B cell (primary cell): ENCODE measurements at regions of chr12 and their contacts with region 1.

Region 1: DNA sequence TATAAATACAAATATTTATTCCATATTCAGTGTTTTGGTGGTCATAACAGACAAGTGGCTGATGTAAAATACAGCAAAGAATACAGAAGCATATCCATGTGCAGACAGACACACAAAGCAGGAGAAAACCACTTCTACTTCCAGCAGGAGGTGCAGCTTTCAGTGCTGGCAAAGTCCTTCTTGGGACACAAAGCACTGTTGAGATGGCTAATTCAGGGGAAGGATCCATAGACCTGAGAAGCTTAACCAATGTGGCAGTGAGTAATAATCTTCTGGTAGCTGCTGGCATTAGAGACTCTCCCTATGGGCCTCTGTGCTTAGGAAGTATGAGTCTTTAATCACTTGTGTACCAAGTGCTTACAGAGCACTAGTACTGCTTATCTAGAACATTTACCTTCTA is 26.8 kb downstream of the AMN1 start:
- DNase-seq: no peak
- ATAC-seq: no peak
- H3K4me3 ChIP-seq: no peak overlapping the region
- H3K4me3 Mint-ChIP-seq: no peak overlapping the region
- H3K27ac ChIP-seq: no peak overlapping the region
- H3K27ac Mint-ChIP-seq: no peak overlapping the region
- H3K4me1 ChIP-seq: peaks cover 0 to 3% of the 10 kb centered on the region in 2 donors
- H3K4me1 Mint-ChIP-seq: peaks cover 13% of the 10 kb centered on the region
- H3K27me3 ChIP-seq: no peaks in the 10 kb centered on the region
- H3K27me3 Mint-ChIP-seq: no peaks in the 10 kb centered on the region
- CTCF ChIP-seq: no peak

Region 2: DNA sequence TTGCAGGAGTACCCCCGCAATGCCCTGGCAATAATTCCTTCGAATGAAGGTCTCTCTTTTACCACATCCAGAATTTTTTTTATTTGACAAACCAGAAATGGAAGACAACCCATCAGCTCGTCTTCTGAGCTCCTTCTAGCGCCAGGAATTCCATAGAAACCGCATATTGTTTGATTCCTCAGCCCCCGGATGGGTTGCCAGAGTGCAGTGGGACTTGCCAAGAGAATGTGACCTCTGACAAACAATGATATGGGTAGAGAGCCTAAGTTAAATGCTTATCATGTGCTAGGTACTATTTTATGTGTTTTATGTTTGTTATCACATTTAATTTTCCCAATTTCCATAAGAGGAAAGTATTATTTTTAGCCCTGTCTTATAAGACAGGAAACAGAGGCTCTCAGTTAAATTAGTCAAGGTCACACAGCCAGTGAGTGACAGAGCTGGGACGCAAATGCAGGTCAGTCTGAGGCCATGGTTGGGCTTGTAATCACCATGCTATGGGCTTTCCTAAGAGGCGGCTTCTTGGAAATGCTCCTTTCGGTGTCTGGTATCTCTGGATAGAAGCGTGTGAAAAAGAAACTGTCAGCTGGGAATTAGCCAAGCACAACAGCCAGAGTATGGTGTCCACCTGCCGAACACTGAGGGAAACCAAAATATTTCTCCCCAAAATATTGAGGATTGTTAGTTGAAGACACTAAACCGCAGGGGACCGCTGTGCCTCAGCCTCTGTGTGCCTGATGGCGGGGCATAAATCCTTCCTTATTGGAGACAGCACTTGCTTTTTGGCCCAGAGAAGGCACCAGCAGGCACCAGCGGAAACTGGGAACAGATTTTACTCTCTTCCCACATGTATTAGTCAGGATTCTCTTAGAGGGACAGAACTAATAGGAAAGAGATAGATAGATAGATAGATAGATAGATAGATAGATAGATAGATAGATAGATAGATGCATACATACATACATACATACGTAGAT is 72.0 kb before region 1 on chr12:
- CTCF ChIA-PET with region 1: no interaction called
- POLR2A ChIA-PET with region 1: no interaction called
- intact Hi-C with region 1: no loop called
- DNase-seq: no peak
- ATAC-seq: no peak
- H3K4me3 ChIP-seq: no peak overlapping the region
- H3K4me3 Mint-ChIP-seq: no peak overlapping the region
- H3K27ac ChIP-seq: no peak overlapping the region
- H3K27ac Mint-ChIP-seq: no peak overlapping the region
- H3K4me1 ChIP-seq: peaks cover 13% of the 10 kb centered on the region in 2 donors
- H3K4me1 Mint-ChIP-seq: peaks cover 29% of the 10 kb centered on the region
- H3K27me3 ChIP-seq: no peaks in the 10 kb centered on the region
- H3K27me3 Mint-ChIP-seq: no peaks in the 10 kb centered on the region
- CTCF ChIP-seq: no peak

Region 3: DNA sequence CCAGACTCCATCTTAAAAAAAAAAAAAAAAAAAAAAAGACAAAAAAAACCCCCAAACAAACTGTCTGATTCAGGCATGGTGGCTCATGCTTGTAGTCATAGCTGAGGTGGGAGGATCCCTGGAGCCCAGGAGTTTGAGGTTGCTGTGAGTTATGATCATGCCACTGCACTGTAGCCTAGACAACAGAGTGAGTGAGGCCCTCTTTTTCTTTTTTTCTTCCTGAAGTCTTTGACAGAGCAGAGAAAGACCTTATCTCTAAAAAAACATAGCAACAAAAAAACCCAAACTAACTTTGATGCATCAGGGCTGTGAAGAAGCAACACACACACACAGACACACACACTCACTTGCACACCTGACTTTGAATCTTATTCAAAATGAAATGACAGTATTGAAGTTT is 34.4 kb after region 1 on chr12:
- CTCF ChIA-PET with region 1: no interaction called
- POLR2A ChIA-PET with region 1: no interaction called
- intact Hi-C with region 1: no loop called
- DNase-seq: peak; percentile 14
- ATAC-seq: peak; percentile 31
- H3K4me3 ChIP-seq: no peak overlapping the region
- H3K4me3 Mint-ChIP-seq: no peak overlapping the region
- H3K27ac ChIP-seq: no peak overlapping the region
- H3K27ac Mint-ChIP-seq: peak overlapping the region; percentile 70
- H3K4me1 ChIP-seq: peaks cover 19 to 33% of the 10 kb centered on the region in 2 donors
- H3K4me1 Mint-ChIP-seq: peaks cover 52% of the 10 kb centered on the region
- H3K27me3 ChIP-seq: no peaks in the 10 kb centered on the region
- H3K27me3 Mint-ChIP-seq: no peaks in the 10 kb centered on the region
- CTCF ChIP-seq: no peak

Region 4: GRCh38 chr12:32005496-32006125 is 303.6 kb after region 1 on chr12:
- CTCF ChIA-PET with region 1: no interaction called
- POLR2A ChIA-PET with region 1: interaction called, 10 read pairs
- intact Hi-C with region 1: no loop called
- DNase-seq: no peak
- ATAC-seq: no peak
- H3K4me3 ChIP-seq: no peak overlapping the region
- H3K4me3 Mint-ChIP-seq: no peak overlapping the region
- H3K27ac ChIP-seq: no peak overlapping the region
- H3K27ac Mint-ChIP-seq: peak overlapping the region; percentile 5
- H3K4me1 ChIP-seq: no peaks in the 10 kb centered on the region
- H3K4me1 Mint-ChIP-seq: no peaks in the 10 kb centered on the region
- H3K27me3 ChIP-seq: no peaks in the 10 kb centered on the region
- H3K27me3 Mint-ChIP-seq: no peaks in the 10 kb centered on the region
- CTCF ChIP-seq: no peak